ENCODE measurements at regions of chr10 and their contacts with region 1.

Region 1: GRCh38 chr10:110326351-110327032 is 21.8 kb upstream of the SMNDC1 start:
- DNase-seq: peak; percentile 80
- H3K4me3 ChIP-seq: no peak overlapping the region
- H3K27ac ChIP-seq: peak overlapping the region; percentile 40
- H3K4me1 ChIP-seq: peaks cover 41% of the 10 kb centered on the region
- H3K27me3 ChIP-seq: no peaks in the 10 kb centered on the region
- CTCF ChIP-seq: no peak

Region 2: GRCh38 chr10:110206995-110207804 is 119.3 kb before region 1 on chr10 and contains the start of gene MXI1:
- CTCF ChIA-PET with region 1: no interaction called
- dilution Hi-C with region 1: no loop called
- in situ Hi-C with region 1: no loop called
- intact Hi-C with region 1: no loop called
- DNase-seq: peak; percentile 83
- H3K4me3 ChIP-seq: peak within 1 kb of the TSS; percentile 75 to 82 (median 80)
- H3K27ac ChIP-seq: peak within 1 kb of the TSS; percentile 33
- H3K4me1 ChIP-seq: peaks cover 10% of the 10 kb centered on the region
- H3K27me3 ChIP-seq: no peaks in the 10 kb centered on the region
- CTCF ChIP-seq: no peak
- total RNA-seq, gene MXI1: 17.0 to 19.3 TPM

Region 3: DNA sequence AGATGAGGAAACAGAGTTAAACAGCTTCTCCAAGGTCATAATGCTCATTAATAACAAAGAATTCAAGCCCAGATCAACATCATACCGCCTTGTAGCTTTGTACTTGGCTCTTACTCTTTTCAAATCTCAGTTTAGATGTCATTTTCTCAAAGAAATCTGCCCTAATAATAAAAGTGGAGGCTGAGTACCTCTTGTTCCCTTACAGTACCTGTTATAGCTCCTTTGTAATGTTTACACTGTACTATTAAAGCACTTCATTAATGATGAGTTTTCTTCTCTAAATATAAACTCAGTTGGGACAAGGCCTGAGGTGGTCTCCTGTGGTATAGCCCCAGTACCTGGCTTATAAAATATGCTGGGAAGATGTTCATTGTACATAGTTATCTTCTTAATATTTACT is 29.5 kb before region 1 on chr10:
- CTCF ChIA-PET with region 1: no interaction called
- dilution Hi-C with region 1: no loop called
- in situ Hi-C with region 1: no loop called
- intact Hi-C with region 1: no loop called
- DNase-seq: no peak
- H3K4me3 ChIP-seq: no peak overlapping the region
- H3K27ac ChIP-seq: no peak overlapping the region
- H3K4me1 ChIP-seq: no peaks in the 10 kb centered on the region
- H3K27me3 ChIP-seq: no peaks in the 10 kb centered on the region
- CTCF ChIP-seq: no peak

Region 4: DNA sequence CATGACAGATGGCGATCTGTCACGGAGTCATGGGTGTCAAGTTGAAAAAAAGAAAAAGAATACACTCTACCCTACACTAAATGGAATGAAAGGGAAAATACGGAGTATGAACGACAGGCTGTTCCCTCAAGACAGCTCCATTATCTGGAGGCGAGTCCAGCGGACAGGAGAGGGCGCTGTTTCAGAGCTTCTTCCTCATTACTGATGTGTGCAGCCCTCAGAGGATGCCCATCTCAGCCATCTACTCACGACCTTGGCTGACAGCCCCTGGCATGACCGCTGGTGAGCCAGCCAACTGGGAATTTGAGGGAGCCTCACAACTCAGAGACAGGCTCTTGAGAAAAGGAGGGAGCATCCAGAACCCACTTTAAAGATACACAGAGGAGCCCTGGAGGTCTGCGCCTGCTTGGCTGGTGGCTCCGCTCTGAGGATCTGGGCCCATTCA is 27.9 kb after region 1 on chr10:
- CTCF ChIA-PET with region 1: no interaction called
- dilution Hi-C with region 1: no loop called
- in situ Hi-C with region 1: no loop called
- intact Hi-C with region 1: no loop called
- DNase-seq: peak; percentile 87
- H3K4me3 ChIP-seq: peak overlapping the region; percentile 25 to 33 (median 32)
- H3K27ac ChIP-seq: peak overlapping the region; percentile 99
- H3K4me1 ChIP-seq: peaks cover 59% of the 10 kb centered on the region
- H3K27me3 ChIP-seq: no peaks in the 10 kb centered on the region
- CTCF ChIP-seq: peak; percentile 83 to 86

Region 5: GRCh38 chr10:110382695-110383094 is 56.2 kb after region 1 on chr10:
- CTCF ChIA-PET with region 1: no interaction called
- dilution Hi-C with region 1: loop called (anchors 5 kb)
- in situ Hi-C with region 1: no loop called
- intact Hi-C with region 1: no loop called
- DNase-seq: no peak
- H3K4me3 ChIP-seq: no peak overlapping the region
- H3K27ac ChIP-seq: no peak overlapping the region
- H3K4me1 ChIP-seq: peaks cover under 1% of the 10 kb centered on the region
- H3K27me3 ChIP-seq: no peaks in the 10 kb centered on the region
- CTCF ChIP-seq: no peak